GM12878 (cell line): ENCODE measurements at regions of chr4 and their contacts with region 1.

Region 1: DNA sequence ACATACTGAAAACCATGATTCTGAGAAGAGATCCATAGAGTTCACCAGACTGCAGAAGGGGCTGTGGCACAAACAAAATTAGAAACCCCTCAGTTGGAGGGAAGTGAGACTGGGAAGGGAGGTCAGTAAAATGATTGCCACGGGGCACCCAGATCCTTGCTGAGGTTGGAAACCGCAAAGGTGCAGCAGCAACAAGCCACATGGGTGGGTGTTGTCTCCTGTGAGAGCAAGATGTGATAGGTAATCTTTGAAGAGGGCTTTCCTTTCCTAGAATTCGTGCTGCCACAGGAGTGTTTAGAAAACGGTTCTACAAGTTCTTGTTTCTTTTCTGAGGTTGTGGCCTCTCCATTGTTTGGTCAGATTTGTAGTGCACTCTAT is 85.5 kb downstream of the NFKB1 start:
- DNase-seq: peak; percentile 36
- ATAC-seq: peak; percentile 63
- H3K4me3 ChIP-seq: no peak overlapping the region
- H3K27ac ChIP-seq: peak overlapping the region; percentile 77
- H3K4me1 ChIP-seq: peaks cover 26% of the 10 kb centered on the region
- H3K27me3 ChIP-seq: no peaks in the 10 kb centered on the region
- CTCF ChIP-seq: no peak
- EP300 ChIP-seq: no peak
- POLR2A ChIP-seq: no peak
- RAD21 ChIP-seq: no peak

Region 2: GRCh38 chr4:102500696-102501446 is 85.8 kb before region 1 on chr4 and contains the start of gene NFKB1:
- CTCF ChIA-PET with region 1: interaction called, 4 read pairs
- POLR2A ChIA-PET with region 1: interaction called, 3 read pairs
- RAD21 ChIA-PET with region 1: interaction called, 5 read pairs
- SMC1A ChIA-PET with region 1: interaction called, 14 read pairs
- in situ Hi-C with region 1: no loop called
- intact Hi-C with region 1: loop called (anchors 5 kb)
- DNase-seq: peak; percentile 55
- ATAC-seq: peak; percentile 48
- H3K4me3 ChIP-seq: peak within 1 kb of the TSS; percentile 75
- H3K27ac ChIP-seq: peak within 1 kb of the TSS; percentile 97
- H3K4me1 ChIP-seq: peaks cover 3% of the 10 kb centered on the region; the same call in 1 of the 2 replicates
- H3K27me3 ChIP-seq: no peaks in the 10 kb centered on the region
- CTCF ChIP-seq: no peak
- EP300 ChIP-seq: peak in 1 of 2 experiments; percentile 65; a peak in 1 of 4 replicates
- POLR2A ChIP-seq: peak; percentile 83; the same call in 1 of the 2 replicates
- RAD21 ChIP-seq: no peak
- polyA plus RNA-seq, gene NFKB1: 20.8 to 32.7 TPM

Region 3: DNA sequence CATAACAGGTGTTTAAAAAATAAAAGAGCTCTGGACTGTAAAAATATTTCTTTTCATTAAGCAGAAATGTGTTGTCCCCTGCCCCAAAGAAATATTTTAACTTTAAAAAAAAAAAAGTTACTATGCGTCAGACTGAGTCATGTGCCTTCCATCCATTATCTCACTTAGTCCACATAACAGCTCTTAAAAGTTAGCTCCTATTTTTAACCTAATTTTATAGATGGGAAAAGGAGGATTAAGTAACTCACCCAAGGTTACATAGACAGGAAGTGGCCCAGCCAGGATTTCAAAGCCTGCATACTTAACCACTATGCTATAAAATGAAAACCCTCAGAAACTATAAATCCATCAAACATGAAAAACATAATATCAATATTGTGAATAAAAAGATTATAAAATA is 76.4 kb after region 1 on chr4:
- CTCF ChIA-PET with region 1: no interaction called
- POLR2A ChIA-PET with region 1: no interaction called
- RAD21 ChIA-PET with region 1: no interaction called
- SMC1A ChIA-PET with region 1: no interaction called
- in situ Hi-C with region 1: no loop called
- intact Hi-C with region 1: no loop called
- DNase-seq: no peak
- ATAC-seq: no peak
- H3K4me3 ChIP-seq: no peak overlapping the region
- H3K27ac ChIP-seq: no peak overlapping the region
- H3K4me1 ChIP-seq: no peaks in the 10 kb centered on the region
- H3K27me3 ChIP-seq: no peaks in the 10 kb centered on the region
- CTCF ChIP-seq: no peak
- EP300 ChIP-seq: no peak
- POLR2A ChIP-seq: no peak
- RAD21 ChIP-seq: no peak

Region 4: DNA sequence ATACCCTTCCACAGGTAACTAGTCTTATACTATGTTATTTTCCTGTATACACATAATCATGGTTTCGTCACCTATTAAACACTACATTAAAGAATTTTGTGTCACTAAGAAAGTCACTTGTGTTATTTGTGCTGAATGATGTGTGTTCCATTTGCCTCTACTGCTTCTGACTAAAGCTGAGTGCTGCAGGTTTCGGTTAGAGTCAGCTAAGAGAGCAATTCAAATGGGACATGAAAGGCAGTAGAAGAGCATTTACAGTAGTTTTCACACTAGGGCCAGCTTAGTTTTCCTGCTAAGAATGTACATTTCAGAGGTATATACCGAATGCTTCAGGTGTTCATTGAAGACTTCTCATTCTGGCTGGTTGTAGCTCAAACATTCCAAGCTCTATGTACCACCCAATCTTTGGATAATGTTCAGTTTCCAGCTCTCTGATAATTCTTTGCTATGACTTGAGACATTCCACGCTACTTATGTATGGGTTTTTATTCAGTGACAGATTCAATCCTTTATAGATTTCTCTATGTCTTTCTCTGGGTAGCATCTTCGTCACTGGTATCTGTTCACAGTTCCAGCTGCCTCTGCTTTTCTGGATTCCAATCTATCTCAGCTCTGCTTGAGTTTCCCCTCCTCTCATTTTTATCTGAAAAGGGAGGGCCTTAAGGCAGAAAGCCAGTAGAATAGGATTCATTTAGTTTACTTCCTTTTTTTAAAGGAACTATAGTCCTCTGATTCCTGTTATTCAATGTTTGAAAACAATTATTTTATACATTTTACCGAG is 1743.7 kb after region 1 on chr4:
- CTCF ChIA-PET with region 1: no interaction called
- POLR2A ChIA-PET with region 1: no interaction called
- RAD21 ChIA-PET with region 1: no interaction called
- SMC1A ChIA-PET with region 1: no interaction called
- in situ Hi-C with region 1: no loop called
- intact Hi-C with region 1: no loop called
- DNase-seq: peak; percentile 5
- ATAC-seq: peak; percentile 48; the same call in 2 of the 3 replicates
- H3K4me3 ChIP-seq: no peak overlapping the region
- H3K27ac ChIP-seq: no peak overlapping the region
- H3K4me1 ChIP-seq: no peaks in the 10 kb centered on the region
- H3K27me3 ChIP-seq: no peaks in the 10 kb centered on the region
- CTCF ChIP-seq: no peak
- EP300 ChIP-seq: no peak
- POLR2A ChIP-seq: no peak
- RAD21 ChIP-seq: 0 out of 2 replicates have a peak, but pooled peaks have one; percentile 10